Cardiac septum (tissue), 1 donor: ENCODE measurements at regions of chr15 and their contacts with region 1.

Region 1: GRCh38 chr15:90174140-90174875 is 26.8 kb upstream of the SEMA4B start:
- DNase-seq: peak; percentile 92

Region 2: DNA sequence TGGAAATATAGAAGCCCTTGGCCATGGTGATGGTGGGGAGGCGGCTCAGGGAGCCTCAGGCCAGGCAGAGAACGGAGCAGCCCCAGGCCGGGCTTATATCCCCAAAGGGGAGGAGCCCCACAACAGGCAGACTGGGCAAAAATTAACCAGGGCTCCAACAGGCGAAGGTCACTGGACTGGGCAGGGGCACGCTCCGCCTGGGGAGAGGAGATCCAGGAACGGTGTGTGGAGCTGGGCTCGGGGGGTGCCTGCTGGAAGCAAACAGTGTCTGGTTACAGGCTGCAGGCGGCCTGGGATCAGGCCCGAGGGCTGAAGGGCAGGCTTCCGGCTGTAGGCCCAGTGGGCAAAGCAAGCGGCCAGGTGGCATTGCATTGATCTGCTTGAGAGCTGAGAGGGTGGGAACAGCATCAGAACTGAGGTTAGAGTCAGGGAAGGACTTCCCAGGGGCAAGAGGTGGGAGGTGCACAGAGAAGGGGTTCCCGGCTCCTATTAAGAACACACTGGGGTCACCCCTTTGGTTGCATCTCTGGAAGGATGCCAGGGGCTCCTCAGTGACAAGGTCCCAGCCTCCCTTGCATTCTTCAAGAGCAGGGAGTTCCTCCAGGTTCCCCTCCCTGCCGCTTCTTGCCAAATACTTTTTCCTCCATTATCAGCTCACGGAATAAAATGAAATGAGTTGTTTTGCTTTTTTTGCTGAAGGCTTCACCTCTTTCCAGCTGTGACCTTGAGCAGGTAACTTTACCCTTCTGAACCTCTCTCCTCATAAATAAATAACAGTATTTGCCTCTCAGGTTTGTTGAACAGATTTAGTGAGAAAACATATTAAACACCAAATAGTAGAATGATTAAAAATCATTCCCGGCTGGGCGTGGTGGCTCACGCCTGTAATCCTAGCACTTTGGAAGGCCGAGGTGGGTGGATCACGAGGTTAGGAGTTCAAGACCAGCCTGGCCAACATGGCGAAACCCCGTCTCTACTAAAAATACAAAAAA is 367.5 kb before region 1 on chr15:
- intact Hi-C with region 1: no loop called
- DNase-seq: no peak

Region 3: DNA sequence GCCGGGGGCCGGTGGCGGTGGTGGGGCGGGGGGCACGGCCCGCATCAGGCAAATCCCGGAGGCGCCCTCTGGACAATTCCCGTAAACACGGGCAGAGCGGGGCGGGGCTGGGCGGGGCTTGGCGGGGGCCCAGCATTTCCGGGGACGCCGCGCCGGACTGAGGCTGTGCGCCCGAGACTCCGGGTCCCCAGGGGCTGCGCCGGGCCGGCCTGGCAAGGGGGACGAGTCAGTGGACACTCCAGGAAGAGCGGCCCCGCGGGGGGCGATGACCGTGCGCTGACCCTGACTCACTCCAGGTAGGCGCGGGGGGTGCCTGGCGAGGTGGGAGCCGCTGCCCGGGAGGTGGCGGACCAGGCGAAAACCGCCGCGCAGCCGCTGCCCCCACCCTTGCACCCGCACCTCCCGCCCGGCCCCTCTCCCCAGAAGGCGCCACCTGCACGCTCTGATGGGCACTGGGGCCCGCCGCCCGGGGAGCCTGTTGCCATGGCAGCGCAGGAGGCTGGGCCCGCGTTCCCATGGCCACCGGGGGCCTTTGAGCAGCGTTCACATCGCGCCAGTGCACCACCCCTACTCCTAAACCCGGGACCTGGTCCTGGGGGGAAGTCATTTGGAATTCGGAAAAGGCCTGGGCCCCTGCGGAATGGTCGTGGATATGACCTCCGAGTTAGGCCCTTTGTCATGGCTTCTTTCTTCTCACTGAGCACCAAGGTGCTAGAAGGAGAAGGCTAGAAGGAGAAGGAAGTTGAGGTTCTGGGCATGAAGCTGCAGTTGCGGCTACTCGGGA is 10.7 kb after region 1 on chr15:
- intact Hi-C with region 1: loop called (anchors 1 kb)
- DNase-seq: peak; percentile 88